ENCODE measurements at regions of chr3 and their contacts with region 1.

Region 1: DNA sequence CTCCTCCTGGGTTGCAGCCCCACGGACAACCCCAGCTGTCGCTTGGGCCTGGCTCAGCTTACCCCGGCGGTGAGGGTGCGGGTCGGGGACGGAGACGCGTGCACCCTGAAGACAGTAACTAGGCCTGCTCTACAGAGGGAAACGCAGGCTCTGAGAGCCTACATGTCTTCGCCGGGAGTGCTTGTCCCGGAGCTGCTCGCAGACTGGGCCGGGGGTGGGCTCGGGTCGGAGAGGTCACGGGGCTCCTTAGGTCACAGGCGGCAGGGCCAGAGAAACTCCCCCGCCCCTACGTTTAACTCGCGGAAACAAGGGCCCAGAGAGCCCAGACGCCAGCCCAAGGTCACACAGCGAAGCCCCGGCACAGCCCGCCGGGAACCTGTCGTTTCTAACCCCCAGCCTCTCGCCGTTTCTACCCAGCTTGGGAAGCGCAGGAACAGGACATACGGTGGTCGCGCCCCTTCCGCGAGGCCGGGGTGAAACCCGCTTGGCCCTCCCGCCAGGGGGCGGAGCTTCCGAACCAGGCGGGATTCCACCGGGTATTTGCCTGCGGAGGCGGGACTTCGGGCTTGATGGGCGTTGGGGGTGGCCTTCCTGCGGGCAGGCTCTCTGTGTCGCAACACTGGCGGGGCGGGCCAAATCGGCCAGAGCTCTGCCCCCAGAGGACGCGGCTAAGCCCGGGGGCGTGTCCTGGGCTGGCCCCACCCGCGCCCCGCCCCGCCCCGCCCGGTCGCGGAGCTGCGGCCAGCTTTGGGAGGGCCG is at the start of gene HDAC11:
- DNase-seq: peak; percentile 97 to 100 (median 100)

Region 2: GRCh38 chr3:13135251-13135810 is 344.4 kb before region 1 on chr3:
- intact Hi-C with region 1: no loop called
- DNase-seq: peak in 7 of 42 donors; percentile 4 to 29 (median 10)

Region 3: GRCh38 chr3:13235079-13235478 is 244.7 kb before region 1 on chr3:
- intact Hi-C with region 1: no loop called
- DNase-seq: no peak

Region 4: DNA sequence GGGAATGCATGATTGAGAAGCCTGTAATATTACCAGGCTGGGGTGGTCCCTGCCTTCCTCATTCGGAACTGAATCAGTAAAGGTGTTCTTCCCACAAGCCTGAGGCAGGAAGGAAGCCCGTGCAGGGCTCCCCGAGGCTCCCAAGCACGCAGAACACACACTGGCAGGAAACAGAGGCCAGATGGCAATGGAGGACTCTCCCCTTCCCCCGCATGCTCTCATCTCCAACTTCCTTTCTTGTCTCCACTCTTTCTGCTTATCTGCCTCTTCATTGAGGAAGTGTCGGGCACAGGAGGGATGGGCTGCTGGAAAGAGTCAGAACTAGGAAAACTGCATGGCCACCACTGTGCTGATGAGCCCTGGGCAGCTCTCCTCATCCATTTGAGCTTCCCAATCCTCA is 183.1 kb before region 1 on chr3:
- intact Hi-C with region 1: loop called (anchors 10 kb)
- DNase-seq: no peak

Region 5: DNA sequence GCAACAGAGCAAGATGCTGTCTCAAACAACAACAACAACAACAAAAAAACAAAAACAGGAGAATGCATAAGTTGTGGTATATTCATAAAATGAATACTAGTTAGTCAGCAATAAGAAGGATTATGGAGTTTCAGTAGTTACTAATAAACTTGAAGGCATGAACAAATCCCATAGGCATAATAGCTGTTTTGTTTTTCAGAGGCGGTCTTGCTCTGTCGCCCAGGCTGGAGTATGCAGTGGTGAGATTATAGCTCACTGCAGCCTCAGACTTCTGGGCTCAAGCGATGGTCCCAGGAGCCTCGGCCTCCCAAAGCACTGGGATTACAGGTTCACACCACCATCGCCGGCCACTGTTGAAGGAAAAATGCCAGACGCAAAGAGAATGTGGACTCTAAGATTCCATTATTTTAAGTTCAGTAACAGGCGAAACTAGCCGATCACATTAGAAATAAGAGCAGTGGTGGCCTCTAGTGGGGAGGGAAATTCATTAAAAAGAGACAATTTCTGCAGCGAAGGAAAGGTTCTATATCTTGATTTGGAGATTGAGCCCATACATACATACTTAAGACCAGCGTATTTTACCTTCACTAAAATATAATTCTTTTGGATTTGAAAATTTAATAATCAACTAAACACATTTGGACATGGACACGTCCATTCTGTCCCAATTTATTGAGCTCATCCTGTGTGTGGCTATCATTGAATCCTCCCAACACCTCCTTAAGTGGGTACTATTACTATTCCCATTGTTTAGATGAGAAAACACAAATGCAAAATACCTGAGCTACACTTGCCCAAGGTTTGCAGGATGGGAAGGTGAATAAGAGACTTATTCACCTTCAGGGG is 27.0 kb before region 1 on chr3:
- intact Hi-C with region 1: loop called (anchors 1 kb)
- DNase-seq: peak in 41 of 42 donors; percentile 21 to 85 (median 56)

Region 6: GRCh38 chr3:13495921-13496723 is 16.4 kb after region 1 on chr3:
- intact Hi-C with region 1: loop called (anchors 2 kb)
- DNase-seq: peak; percentile 51 to 94 (median 87)